Motor neuron (in vitro differentiated cells): ENCODE measurements at regions of chr14 and their contacts with region 1.

Region 1: DNA sequence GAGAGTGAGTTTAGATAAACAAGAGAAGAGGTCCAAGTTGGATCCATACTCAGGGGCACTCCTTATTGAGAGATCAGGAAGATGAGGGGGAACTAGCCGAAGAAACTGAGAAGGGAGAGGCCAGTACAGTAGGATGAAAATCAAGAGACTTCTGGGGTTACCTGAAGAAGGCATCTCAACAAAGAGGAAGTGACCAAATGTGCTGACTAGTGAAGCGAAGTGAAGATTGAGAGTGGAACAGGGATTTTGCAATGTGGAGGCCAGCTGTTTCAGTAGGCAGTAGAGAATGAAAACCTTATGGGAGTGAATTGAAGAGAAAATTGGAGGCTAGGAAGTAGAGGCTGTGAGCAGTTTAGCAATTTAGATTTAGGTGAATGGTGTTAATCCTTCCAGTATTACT is 153.0 kb downstream of the SYNE2 start:
- ATAC-seq: no peak
- H3K4me3 ChIP-seq: no peak overlapping the region
- H3K27ac ChIP-seq: no peak overlapping the region
- H3K4me1 ChIP-seq: no peaks in the 10 kb centered on the region

Region 2: DNA sequence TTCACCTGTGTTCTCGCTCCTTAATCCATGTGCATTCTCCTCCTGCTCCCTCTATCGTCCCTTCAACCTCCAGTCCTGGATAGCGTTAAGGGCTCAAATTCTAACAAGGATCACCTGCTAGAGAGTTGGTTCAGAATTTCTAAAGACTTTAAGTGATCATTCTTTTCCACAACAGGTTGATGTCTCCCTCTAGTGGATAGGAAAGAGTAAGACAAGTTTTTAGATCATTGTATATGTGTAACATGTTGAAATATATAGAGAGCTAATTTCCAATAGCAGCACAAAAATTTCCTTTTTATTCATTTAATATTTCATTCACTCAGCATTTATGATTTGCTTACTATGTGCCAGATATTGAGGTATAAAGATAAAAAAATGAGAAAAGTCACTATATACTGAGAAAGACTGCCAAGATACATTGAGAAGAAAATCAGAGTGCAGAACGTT is 297.7 kb after region 1 on chr14:
- in situ Hi-C with region 1: loop called in 3 of 9 experiments (anchors 25 kb)
- ATAC-seq: peak; percentile 32 to 90 (median 65)
- H3K4me3 ChIP-seq: no peak overlapping the region
- H3K27ac ChIP-seq: no peak overlapping the region
- H3K4me1 ChIP-seq: no peaks in the 10 kb centered on the region